GM12878 (cell line): ENCODE measurements at regions of chr1 and their contacts with region 1.

Region 1: DNA sequence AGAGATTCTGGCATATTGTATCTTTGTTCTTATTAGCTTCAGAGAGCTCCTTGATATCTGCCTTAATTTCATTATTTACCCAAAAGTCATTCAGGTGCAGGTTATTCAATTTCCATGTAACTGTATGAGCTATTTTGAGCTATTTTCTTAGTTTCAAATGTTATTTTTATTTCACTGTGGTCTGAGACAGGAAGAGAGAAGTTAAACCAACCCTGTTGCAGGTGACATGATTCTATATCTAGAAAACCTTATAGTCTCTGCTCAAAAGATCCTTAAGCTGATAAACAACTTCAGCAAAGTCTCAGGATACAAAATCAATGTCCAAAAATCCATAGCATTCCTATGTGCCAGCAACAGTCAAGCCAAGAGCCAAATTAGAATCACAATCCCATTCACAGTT is 1644.0 kb upstream of the B3GALT2 start:
- DNase-seq: no peak
- ATAC-seq: peak; percentile 77
- H3K4me3 ChIP-seq: peak overlapping the region; percentile 37; the same call in 1 of the 2 replicates
- H3K27ac ChIP-seq: peak overlapping the region; percentile 60
- H3K4me1 ChIP-seq: peaks cover 16% of the 10 kb centered on the region
- H3K27me3 ChIP-seq: no peaks in the 10 kb centered on the region
- CTCF ChIP-seq: no peak
- EP300 ChIP-seq: peak; percentile 30 to 70; a peak in 2 of 4 replicates
- POLR2A ChIP-seq: no peak
- RAD21 ChIP-seq: no peak

Region 2: GRCh38 chr1:194487172-194487571 is 343.2 kb before region 1 on chr1:
- CTCF ChIA-PET with region 1: no interaction called
- POLR2A ChIA-PET with region 1: no interaction called
- RAD21 ChIA-PET with region 1: no interaction called
- SMC1A ChIA-PET with region 1: no interaction called
- in situ Hi-C with region 1: no loop called
- intact Hi-C with region 1: no loop called
- DNase-seq: no peak
- ATAC-seq: no peak
- H3K4me3 ChIP-seq: no peak overlapping the region
- H3K27ac ChIP-seq: no peak overlapping the region
- H3K4me1 ChIP-seq: no peaks in the 10 kb centered on the region
- H3K27me3 ChIP-seq: no peaks in the 10 kb centered on the region
- CTCF ChIP-seq: no peak
- EP300 ChIP-seq: no peak
- POLR2A ChIP-seq: no peak
- RAD21 ChIP-seq: no peak

Region 3: GRCh38 chr1:194512957-194513356 is 317.4 kb before region 1 on chr1:
- CTCF ChIA-PET with region 1: no interaction called
- POLR2A ChIA-PET with region 1: no interaction called
- RAD21 ChIA-PET with region 1: no interaction called
- SMC1A ChIA-PET with region 1: no interaction called
- in situ Hi-C with region 1: no loop called
- intact Hi-C with region 1: no loop called
- DNase-seq: no peak
- ATAC-seq: no peak
- H3K4me3 ChIP-seq: no peak overlapping the region
- H3K27ac ChIP-seq: no peak overlapping the region
- H3K4me1 ChIP-seq: no peaks in the 10 kb centered on the region
- H3K27me3 ChIP-seq: no peaks in the 10 kb centered on the region
- CTCF ChIP-seq: no peak
- EP300 ChIP-seq: no peak
- POLR2A ChIP-seq: no peak
- RAD21 ChIP-seq: no peak

Region 4: DNA sequence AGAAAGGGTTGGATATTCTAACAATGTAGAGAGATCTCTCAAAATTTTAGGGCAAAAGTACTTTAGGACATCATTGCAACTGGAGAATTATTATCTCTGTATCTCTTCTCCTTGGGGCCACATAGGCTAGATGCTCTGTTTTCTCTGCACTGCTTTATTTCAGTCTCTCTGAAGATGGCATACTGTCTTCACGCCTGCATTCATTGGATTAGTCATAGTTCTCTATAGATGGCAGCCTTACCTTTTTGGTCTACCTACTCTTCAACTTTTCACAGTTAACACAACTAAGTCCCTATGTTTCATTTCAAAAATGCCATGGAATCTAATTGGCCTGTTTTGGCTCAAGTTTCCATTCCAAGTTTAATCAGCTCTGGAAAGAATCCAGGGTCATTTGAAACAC is 20.7 kb before region 1 on chr1:
- CTCF ChIA-PET with region 1: interaction called, 5 read pairs
- POLR2A ChIA-PET with region 1: no interaction called
- RAD21 ChIA-PET with region 1: interaction called, 6 read pairs
- SMC1A ChIA-PET with region 1: interaction called, 14 read pairs
- in situ Hi-C with region 1: no loop called
- intact Hi-C with region 1: no loop called
- DNase-seq: no peak
- ATAC-seq: peak; percentile 83
- H3K4me3 ChIP-seq: no peak overlapping the region
- H3K27ac ChIP-seq: no peak overlapping the region
- H3K4me1 ChIP-seq: no peaks in the 10 kb centered on the region
- H3K27me3 ChIP-seq: no peaks in the 10 kb centered on the region
- CTCF ChIP-seq: peak in 1 of 3 experiments; percentile 44; a peak in 2 of 6 replicates
- EP300 ChIP-seq: no peak
- POLR2A ChIP-seq: no peak
- RAD21 ChIP-seq: peak; percentile 64

Region 5: GRCh38 chr1:194818674-194819073 is 11.7 kb before region 1 on chr1:
- CTCF ChIA-PET with region 1: no interaction called
- POLR2A ChIA-PET with region 1: no interaction called
- RAD21 ChIA-PET with region 1: no interaction called
- SMC1A ChIA-PET with region 1: interaction called, 14 read pairs
- in situ Hi-C with region 1: no loop called
- intact Hi-C with region 1: no loop called
- DNase-seq: no peak
- ATAC-seq: no peak
- H3K4me3 ChIP-seq: no peak overlapping the region
- H3K27ac ChIP-seq: no peak overlapping the region
- H3K4me1 ChIP-seq: no peaks in the 10 kb centered on the region
- H3K27me3 ChIP-seq: no peaks in the 10 kb centered on the region
- CTCF ChIP-seq: no peak
- EP300 ChIP-seq: no peak
- POLR2A ChIP-seq: no peak
- RAD21 ChIP-seq: no peak

Region 6: DNA sequence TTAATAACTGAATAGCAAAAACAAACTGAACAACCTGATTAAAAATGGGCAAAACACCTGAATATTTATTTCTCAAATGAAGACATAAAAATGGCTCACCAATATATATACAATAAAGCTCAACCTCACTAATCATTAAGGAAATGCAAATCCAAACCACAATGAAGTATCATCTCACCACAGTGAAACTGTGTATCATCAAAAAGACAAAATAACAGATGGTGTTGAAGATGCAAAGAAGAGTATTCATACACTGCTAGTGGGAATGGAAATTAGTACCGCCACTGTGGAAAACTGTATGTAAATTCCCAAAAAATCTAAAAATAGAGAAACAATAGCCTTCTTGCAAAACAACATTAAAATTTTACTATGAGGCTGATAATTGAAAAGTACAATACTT is 16.1 kb after region 1 on chr1:
- CTCF ChIA-PET with region 1: no interaction called
- POLR2A ChIA-PET with region 1: no interaction called
- RAD21 ChIA-PET with region 1: no interaction called
- SMC1A ChIA-PET with region 1: interaction called, 11 read pairs
- in situ Hi-C with region 1: no loop called
- intact Hi-C with region 1: no loop called
- DNase-seq: no peak
- ATAC-seq: peak; percentile 75
- H3K4me3 ChIP-seq: no peak overlapping the region
- H3K27ac ChIP-seq: no peak overlapping the region
- H3K4me1 ChIP-seq: no peaks in the 10 kb centered on the region
- H3K27me3 ChIP-seq: no peaks in the 10 kb centered on the region
- CTCF ChIP-seq: no peak
- EP300 ChIP-seq: no peak
- POLR2A ChIP-seq: no peak
- RAD21 ChIP-seq: no peak

Region 7: DNA sequence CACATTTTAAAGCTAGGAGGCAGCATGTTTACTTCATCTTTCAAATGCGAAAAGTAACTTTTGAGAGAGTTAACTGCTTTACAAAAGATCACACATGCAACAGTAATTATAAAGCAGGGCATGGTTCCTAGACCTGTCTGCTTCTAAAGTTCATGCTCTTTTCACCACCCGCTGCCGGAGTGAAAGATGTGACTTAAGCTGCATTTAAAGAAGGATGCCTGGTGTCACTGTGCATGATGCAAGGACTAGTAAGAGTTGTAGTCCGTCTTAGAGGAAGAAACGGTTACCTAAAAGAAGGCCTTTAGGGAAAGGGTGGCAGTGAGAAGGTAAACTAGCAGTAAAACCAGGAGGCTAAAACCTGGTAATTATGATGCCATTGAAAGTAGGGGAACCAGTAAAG is 88.8 kb after region 1 on chr1:
- CTCF ChIA-PET with region 1: no interaction called
- POLR2A ChIA-PET with region 1: no interaction called
- RAD21 ChIA-PET with region 1: no interaction called
- SMC1A ChIA-PET with region 1: no interaction called
- in situ Hi-C with region 1: no loop called
- intact Hi-C with region 1: no loop called
- DNase-seq: no peak
- ATAC-seq: no peak
- H3K4me3 ChIP-seq: no peak overlapping the region
- H3K27ac ChIP-seq: no peak overlapping the region
- H3K4me1 ChIP-seq: no peaks in the 10 kb centered on the region
- H3K27me3 ChIP-seq: no peaks in the 10 kb centered on the region
- CTCF ChIP-seq: no peak
- EP300 ChIP-seq: no peak
- POLR2A ChIP-seq: no peak
- RAD21 ChIP-seq: no peak